ENCODE measurements at regions of chr10 and their contacts with region 1.

Region 1: DNA sequence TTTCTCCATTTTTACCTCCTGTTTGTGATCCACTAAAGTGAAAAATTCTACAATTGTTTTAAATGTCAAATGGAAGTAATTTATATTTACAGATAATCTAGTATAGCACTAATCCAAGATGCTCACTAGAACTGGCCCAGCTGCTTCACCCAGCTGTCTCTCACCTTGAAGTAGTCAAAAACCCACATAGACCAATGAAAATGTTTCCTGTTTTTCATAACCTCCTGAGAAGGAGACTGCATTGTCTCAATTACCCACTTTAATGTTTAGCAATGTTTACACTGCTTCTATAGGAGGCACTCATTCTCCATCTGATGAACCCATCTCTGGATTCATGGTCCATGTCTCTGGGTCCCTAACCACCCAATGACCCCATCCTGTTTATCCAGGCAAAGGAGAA is 56.1 kb upstream of the ADO start:
- DNase-seq: no peak
- H3K4me3 Mint-ChIP-seq: no peak overlapping the region
- H3K27ac Mint-ChIP-seq: no peak overlapping the region
- H3K4me1 Mint-ChIP-seq: peaks cover 17% of the 10 kb centered on the region
- H3K27me3 Mint-ChIP-seq: no peaks in the 10 kb centered on the region

Region 2: GRCh38 chr10:62732841-62733653 is 15.3 kb before region 1 on chr10:
- CTCF ChIA-PET with region 1: interaction called, 13 read pairs
- POLR2A ChIA-PET with region 1: no interaction called
- DNase-seq: peak; percentile 81
- H3K4me3 Mint-ChIP-seq: peak overlapping the region; percentile 48
- H3K27ac Mint-ChIP-seq: no peak overlapping the region
- H3K4me1 Mint-ChIP-seq: peaks cover 16% of the 10 kb centered on the region
- H3K27me3 Mint-ChIP-seq: peaks cover 10% of the 10 kb centered on the region

Measured in activated CD4-positive, alpha-beta T cell treated with anti-CD3 and anti-CD28 coated beads, Interleukin-2, amount 10 ng/mL, durations not matched to agents 7 days and 5 days (primary cell).